Right cardiac atrium (tissue), 5 donors: ENCODE measurements at regions of chr5 and their contacts with region 1.

Region 1: DNA sequence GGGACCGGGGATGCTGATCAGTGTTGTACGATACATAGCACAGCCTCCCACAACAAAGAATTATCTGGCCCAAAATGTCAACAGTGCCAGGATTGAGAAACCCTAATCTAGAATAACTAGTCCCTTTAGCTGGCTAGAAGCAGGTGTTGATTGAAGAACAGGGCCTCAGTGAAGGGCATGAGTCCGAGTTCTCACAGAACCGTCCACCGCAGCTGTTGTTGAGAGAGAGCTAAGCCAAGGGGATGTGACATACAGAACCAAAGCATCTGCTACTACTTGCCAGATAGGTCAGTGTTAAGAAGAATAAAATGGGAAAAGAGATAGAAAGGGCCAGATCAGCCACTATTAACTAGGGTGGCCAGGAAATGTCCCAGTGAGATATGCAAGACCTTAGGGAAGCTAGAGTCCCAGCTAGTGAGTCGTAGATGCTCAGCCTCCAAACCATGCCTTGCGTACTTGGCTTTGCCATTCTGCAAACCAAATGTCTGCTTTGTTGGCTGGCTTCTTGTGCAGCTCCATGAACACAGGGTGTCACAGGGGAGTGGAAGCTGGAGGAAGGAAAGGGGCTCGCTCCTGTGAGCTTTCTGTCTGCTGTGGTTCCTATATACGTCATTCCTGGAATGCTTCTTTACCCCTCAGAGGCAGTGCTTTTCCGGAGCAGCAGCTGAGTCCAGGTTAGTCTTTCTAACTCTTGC is 68.9 kb downstream of the FBXO38 start:
- DNase-seq: peak; percentile 59 to 76 (median 71)
- ATAC-seq: peak; percentile 79 to 87
- H3K4me3 ChIP-seq: no peak overlapping the region
- H3K27ac ChIP-seq: peak overlapping the region; percentile 94
- H3K4me1 ChIP-seq: no peaks in the 10 kb centered on the region
- H3K27me3 ChIP-seq: no peaks in the 10 kb centered on the region

Region 2: GRCh38 chr5:148653836-148654781 is 201.5 kb after region 1 on chr5 and contains the start of gene HTR4:
- intact Hi-C with region 1: loop called in 1 of 4 experiments (anchors 5 kb)
- DNase-seq: peak; percentile 31 to 70 (median 61)
- ATAC-seq: peak; percentile 69 to 77
- H3K4me3 ChIP-seq: peak within 1 kb of the TSS; percentile 65
- H3K27ac ChIP-seq: peak within 1 kb of the TSS; percentile 36
- H3K4me1 ChIP-seq: no peaks in the 10 kb centered on the region
- H3K27me3 ChIP-seq: no peaks in the 10 kb centered on the region
- total RNA-seq, gene HTR4: 7.6 to 9.1 (median 8.5) TPM